Endothelial cell of umbilical vein (primary cell): ENCODE measurements at regions of chr7 and their contacts with region 1.

Region 1: DNA sequence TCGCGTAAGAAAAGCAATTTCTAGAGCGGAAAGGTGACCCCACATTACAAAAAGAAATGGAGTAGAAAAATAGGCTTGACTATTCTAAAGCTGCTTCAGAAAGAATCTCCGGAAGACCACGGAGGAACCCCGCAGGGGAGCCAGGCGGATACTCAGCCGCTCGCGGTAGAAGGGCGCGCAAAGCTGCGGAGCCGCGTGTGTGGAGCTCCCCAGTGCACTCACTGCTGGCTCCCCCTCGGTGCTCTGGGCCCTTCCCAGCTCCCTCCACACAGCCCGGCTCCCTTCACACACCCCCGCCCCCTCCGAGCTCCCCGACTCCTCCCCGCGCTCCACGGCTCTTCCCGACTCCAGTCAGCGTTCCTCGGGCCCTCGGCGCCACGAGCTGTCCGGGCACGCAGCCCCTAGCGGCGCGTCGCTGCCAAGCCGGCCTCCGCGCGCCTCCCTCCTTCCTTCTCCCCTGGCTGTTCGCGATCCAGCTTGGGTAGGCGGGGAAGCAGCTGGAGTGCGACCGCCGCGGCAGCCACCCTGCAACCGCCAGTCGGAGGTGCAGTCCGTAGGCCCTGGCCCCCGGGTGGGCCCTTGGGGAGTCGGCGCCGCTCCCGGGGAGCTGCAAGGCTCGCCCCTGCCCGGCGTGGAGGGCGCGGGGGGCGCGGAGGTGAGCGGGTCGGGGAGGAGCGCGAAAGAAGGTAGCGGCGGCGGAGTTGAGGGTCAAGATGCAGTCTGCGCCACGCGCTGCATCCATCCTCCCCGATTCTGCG is at the start of gene STEAP2:
- DNase-seq: peak; percentile 94
- H3K4me3 ChIP-seq: peak within 1 kb of the TSS; percentile 63 to 85 (median 67)
- H3K27ac ChIP-seq: peak within 1 kb of the TSS; percentile 75
- H3K4me1 ChIP-seq: peaks cover 12% of the 10 kb centered on the region
- H3K27me3 ChIP-seq: no peaks in the 10 kb centered on the region
- CTCF ChIP-seq: peak; percentile 63 to 84
- POLR2A ChIP-seq: peak; percentile 65
- total RNA-seq, gene STEAP2: 4.2 and 4.6 TPM in 2 replicates

Region 2: GRCh38 chr7:89988074-89988473 is 223.5 kb before region 1 on chr7:
- CTCF ChIA-PET with region 1: no interaction called
- POLR2A ChIA-PET with region 1: no interaction called
- dilution Hi-C with region 1: no loop called
- intact Hi-C with region 1: no loop called
- DNase-seq: no peak
- H3K4me3 ChIP-seq: no peak overlapping the region
- H3K27ac ChIP-seq: no peak overlapping the region
- H3K4me1 ChIP-seq: no peaks in the 10 kb centered on the region
- H3K27me3 ChIP-seq: no peaks in the 10 kb centered on the region
- CTCF ChIP-seq: no peak
- POLR2A ChIP-seq: no peak

Region 3: GRCh38 chr7:90155206-90155605 is 56.4 kb before region 1 on chr7:
- CTCF ChIA-PET with region 1: interaction called, 70 read pairs
- POLR2A ChIA-PET with region 1: interaction called, 6 read pairs
- dilution Hi-C with region 1: no loop called
- intact Hi-C with region 1: loop called (anchors 1 kb)
- DNase-seq: peak; percentile 22
- H3K4me3 ChIP-seq: peak overlapping the region; percentile 26 to 77 (median 77)
- H3K27ac ChIP-seq: peak overlapping the region; percentile 53
- H3K4me1 ChIP-seq: peaks cover 37% of the 10 kb centered on the region
- H3K27me3 ChIP-seq: no peaks in the 10 kb centered on the region
- CTCF ChIP-seq: no peak
- POLR2A ChIP-seq: no peak

Region 4: DNA sequence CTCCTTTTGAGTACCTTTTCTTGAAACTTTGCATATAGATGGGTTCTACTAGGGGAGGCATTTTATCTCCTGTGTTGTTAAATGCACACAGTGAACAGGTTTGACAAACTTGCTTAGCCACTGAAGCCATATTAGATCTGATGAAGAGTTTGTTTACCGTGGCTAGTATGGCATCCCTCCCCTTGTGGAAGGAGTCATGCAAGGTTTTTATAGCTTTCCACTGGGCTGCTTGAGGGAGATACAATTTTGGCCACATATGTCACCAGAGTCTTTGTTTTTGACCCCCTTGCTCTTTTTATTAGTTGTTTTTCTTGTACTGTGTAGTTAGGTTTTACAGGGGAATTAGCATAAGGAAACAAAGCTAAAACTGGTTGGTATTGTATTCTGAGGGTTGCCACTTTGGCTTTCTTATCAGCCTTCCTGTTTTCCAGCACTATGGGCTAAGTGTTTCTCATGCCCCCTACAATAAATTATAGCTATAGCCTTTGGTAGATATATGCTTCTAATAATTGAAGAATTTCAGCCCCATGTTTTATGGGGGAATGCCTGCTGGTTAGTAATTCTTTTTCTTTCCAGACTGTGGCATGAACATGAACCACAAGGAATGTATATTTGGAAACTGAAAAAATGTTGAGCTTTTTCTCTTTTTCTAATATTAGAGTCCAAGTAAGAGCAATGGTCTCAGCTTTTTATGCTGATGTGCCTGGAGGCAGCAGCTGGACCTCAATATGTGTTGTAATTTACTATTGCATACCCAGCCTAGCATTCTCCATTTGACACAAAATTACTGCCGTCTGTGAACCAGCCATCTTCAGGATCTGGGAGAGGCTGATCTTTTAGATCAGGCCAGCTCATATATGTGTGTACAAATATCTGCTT is 18.5 kb before region 1 on chr7:
- CTCF ChIA-PET with region 1: interaction called, 12 read pairs
- POLR2A ChIA-PET with region 1: no interaction called
- dilution Hi-C with region 1: no loop called
- intact Hi-C with region 1: no loop called
- DNase-seq: peak; percentile 87
- H3K4me3 ChIP-seq: no peak overlapping the region
- H3K27ac ChIP-seq: no peak overlapping the region
- H3K4me1 ChIP-seq: no peaks in the 10 kb centered on the region
- H3K27me3 ChIP-seq: no peaks in the 10 kb centered on the region
- CTCF ChIP-seq: no peak
- POLR2A ChIP-seq: no peak

Region 5: GRCh38 chr7:90244909-90245851 is 33.6 kb after region 1 on chr7 and contains the start of gene CFAP69:
- CTCF ChIA-PET with region 1: interaction called, 7 read pairs
- POLR2A ChIA-PET with region 1: no interaction called
- dilution Hi-C with region 1: no loop called
- intact Hi-C with region 1: loop called (anchors 1 kb)
- DNase-seq: peak; percentile 86
- H3K4me3 ChIP-seq: peak within 1 kb of the TSS; percentile 45 to 74 (median 57)
- H3K27ac ChIP-seq: peak within 1 kb of the TSS; percentile 13
- H3K4me1 ChIP-seq: peaks cover 9% of the 10 kb centered on the region
- H3K27me3 ChIP-seq: no peaks in the 10 kb centered on the region
- CTCF ChIP-seq: peak; percentile 4 to 49
- POLR2A ChIP-seq: no peak
- total RNA-seq, gene CFAP69: 2.9 and 4.4 TPM in 2 replicates

Region 6: GRCh38 chr7:90298145-90299038 is 86.8 kb after region 1 on chr7:
- CTCF ChIA-PET with region 1: interaction called, 7 read pairs
- POLR2A ChIA-PET with region 1: no interaction called
- dilution Hi-C with region 1: no loop called
- intact Hi-C with region 1: loop called (anchors 2 kb)
- DNase-seq: peak; percentile 66
- H3K4me3 ChIP-seq: no peak overlapping the region
- H3K27ac ChIP-seq: no peak overlapping the region
- H3K4me1 ChIP-seq: no peaks in the 10 kb centered on the region
- H3K27me3 ChIP-seq: no peaks in the 10 kb centered on the region
- CTCF ChIP-seq: peak; percentile 48 to 65
- POLR2A ChIP-seq: no peak

Region 7: DNA sequence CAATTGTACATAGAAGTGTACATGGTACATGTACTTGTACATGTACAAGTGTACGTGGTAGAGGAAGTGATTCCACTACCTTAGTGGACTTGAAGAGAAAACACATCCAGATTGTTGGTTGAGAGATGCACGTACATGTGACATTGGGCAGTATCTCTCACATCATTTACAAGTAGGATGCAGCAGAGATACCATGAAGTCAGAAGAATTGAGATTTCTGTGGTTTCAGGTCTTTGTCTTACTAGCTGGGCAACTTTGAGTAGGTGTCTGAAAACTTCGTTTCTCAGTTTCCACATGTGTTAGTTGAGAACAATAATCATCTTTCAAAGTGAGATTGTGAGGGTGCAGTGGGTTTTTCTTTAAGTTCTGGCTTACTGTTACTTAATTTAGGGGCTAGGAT is 213.2 kb after region 1 on chr7:
- CTCF ChIA-PET with region 1: interaction called, 17 read pairs
- POLR2A ChIA-PET with region 1: no interaction called
- dilution Hi-C with region 1: no loop called
- intact Hi-C with region 1: no loop called
- DNase-seq: no peak
- H3K4me3 ChIP-seq: no peak overlapping the region
- H3K27ac ChIP-seq: no peak overlapping the region
- H3K4me1 ChIP-seq: peaks cover 9% of the 10 kb centered on the region
- H3K27me3 ChIP-seq: peaks cover 0 to 2% of the 10 kb centered on the region in 2 experiments
- CTCF ChIP-seq: no peak
- POLR2A ChIP-seq: no peak

Region 8: GRCh38 chr7:90520484-90520883 is 308.9 kb after region 1 on chr7:
- CTCF ChIA-PET with region 1: no interaction called
- POLR2A ChIA-PET with region 1: no interaction called
- dilution Hi-C with region 1: no loop called
- intact Hi-C with region 1: no loop called
- DNase-seq: peak; percentile 13
- H3K4me3 ChIP-seq: no peak overlapping the region
- H3K27ac ChIP-seq: no peak overlapping the region
- H3K4me1 ChIP-seq: no peaks in the 10 kb centered on the region
- H3K27me3 ChIP-seq: no peaks in the 10 kb centered on the region
- CTCF ChIP-seq: peak; percentile 28 to 39
- POLR2A ChIP-seq: no peak

Region 9: DNA sequence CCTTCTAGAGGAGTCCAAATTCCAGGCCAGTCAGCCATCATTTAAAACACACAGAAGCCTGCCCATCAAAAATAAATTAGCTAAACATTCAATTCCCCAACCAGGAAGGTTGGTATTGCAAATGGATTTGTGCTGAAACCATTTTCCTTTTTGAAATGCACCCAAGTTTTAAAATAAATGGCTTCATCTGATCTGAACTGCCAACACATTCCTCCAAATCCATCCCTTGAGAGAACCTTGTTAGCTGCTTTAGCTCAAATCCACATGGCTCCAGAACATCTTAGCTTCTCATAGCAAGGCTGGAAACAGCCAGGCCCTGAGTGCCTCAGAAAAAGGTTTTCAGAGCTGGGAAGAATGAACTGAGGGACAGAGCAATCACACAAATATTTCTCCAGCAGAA is 1359.0 kb after region 1 on chr7:
- CTCF ChIA-PET with region 1: no interaction called
- POLR2A ChIA-PET with region 1: no interaction called
- dilution Hi-C with region 1: no loop called
- intact Hi-C with region 1: no loop called
- DNase-seq: no peak
- H3K4me3 ChIP-seq: no peak overlapping the region
- H3K27ac ChIP-seq: no peak overlapping the region
- H3K4me1 ChIP-seq: no peaks in the 10 kb centered on the region
- H3K27me3 ChIP-seq: no peaks in the 10 kb centered on the region
- CTCF ChIP-seq: no peak
- POLR2A ChIP-seq: no peak